Mucosa of descending colon (tissue), 3 donors: ENCODE measurements at regions of chr1 and their contacts with region 1.

Region 1: DNA sequence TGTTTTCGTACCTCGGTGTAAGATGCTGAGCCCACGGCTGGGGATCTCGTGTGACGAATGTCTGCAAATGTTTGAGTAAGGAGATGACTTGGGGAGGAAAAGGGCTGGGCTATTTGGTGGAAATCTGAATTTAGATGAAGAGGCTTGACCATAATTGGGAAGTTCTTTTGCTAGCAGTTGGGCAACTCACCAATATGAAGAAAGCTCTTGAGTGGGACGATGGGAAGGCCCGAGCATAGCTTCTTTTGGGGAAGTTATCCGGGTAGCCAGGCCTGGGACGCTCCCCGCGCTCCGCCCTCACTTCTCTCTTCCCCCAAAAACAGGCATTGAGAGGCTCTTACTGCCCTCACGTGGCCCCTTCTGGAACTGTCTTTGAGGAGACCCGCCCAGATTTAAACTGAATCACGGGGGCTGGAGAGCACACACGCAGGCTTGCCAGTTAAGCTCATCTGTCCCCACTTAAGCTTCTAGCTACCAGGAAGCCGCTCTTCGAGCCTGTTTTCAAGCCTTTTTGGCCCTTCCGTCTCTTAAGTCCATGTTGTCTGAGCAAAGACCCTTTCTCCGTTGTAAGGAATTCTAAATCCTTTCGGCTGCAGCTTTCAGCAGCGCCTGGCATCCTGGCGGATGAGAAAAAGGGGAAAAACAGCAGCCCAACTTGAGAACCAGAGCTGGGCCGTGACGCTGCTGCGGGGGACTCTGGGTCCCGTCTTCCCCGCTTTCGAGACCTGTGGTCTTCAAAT is 93.1 kb downstream of the NID1 start:
- DNase-seq: peak; percentile 88 to 92 (median 89)
- ATAC-seq: peak; percentile 99
- H3K4me3 ChIP-seq: no peak overlapping the region
- H3K4me1 ChIP-seq: peaks cover 5% of the 10 kb centered on the region
- CTCF ChIP-seq: peak; percentile 60

Region 2: GRCh38 chr1:235504496-235505222 is 467.1 kb before region 1 on chr1:
- intact Hi-C with region 1: loop called in 1 of 2 experiments (anchors 10 kb)
- DNase-seq: peak; percentile 99 to 100 (median 100)
- ATAC-seq: peak; percentile 92
- H3K4me3 ChIP-seq: peak overlapping the region; percentile 60
- H3K4me1 ChIP-seq: peaks cover 23% of the 10 kb centered on the region
- CTCF ChIP-seq: peak; percentile 93

Region 3: GRCh38 chr1:235758931-235759330 is 212.8 kb before region 1 on chr1:
- intact Hi-C with region 1: no loop called
- DNase-seq: no peak
- ATAC-seq: no peak
- H3K4me3 ChIP-seq: no peak overlapping the region
- H3K4me1 ChIP-seq: no peaks in the 10 kb centered on the region
- CTCF ChIP-seq: no peak

Region 4: GRCh38 chr1:235866913-235867845 is 104.6 kb before region 1 on chr1:
- intact Hi-C with region 1: loop called in 1 of 2 experiments (anchors 10 kb)
- DNase-seq: peak; percentile 96 to 99 (median 97)
- ATAC-seq: peak; percentile 96
- H3K4me3 ChIP-seq: peak overlapping the region; percentile 78
- H3K4me1 ChIP-seq: peaks cover 8% of the 10 kb centered on the region
- CTCF ChIP-seq: no peak